ENCODE measurements at regions of chr17 and their contacts with region 1.

Region 1: DNA sequence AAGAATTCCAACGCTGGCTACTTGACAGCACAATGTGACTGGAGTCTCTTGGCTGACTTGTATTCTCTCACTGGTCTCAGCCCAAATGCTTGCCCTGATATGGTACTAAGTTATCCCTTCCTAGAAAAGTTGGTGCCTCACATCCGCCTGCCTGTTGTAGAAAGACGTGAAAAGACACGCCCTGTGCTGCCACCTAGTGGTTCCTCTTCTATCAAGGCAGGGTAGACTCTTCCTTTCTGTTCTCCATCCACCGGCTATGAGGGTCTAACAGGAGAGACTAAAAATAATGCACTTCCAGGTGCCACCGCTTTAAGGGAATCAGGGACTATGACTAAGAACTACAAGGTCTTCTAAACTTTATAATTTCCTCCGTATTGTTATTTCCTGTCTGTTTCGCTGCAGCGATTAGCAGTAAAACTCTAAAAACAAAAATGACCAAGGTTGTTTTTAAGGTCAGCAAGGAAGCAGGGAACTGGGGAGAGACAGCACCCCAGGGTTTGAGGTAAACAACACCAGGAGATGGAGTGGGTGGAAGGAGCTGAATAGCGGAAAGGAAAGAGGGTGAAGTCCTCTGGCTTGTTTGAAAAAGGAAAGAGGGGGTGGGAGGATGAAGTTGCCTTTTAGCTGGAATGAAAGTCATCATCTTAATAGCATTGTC is 109.5 kb downstream of the YPEL2 start:
- DNase-seq: peak; percentile 88
- ATAC-seq: peak; percentile 99
- H3K4me3 ChIP-seq: no peak overlapping the region
- H3K27ac ChIP-seq: no peak overlapping the region
- H3K4me1 ChIP-seq: peaks cover 5% of the 10 kb centered on the region
- H3K27me3 ChIP-seq: no peaks in the 10 kb centered on the region
- CTCF ChIP-seq: peak; percentile 81
- POLR2A ChIP-seq: no peak
- RAD21 ChIP-seq: peak; percentile 94

Region 2: GRCh38 chr17:59220376-59221158 is 220.3 kb before region 1 on chr17 and contains the start of gene GDPD1:
- CTCF ChIA-PET with region 1: no interaction called
- POLR2A ChIA-PET with region 1: no interaction called
- dilution Hi-C with region 1: no loop called
- in situ Hi-C with region 1: no loop called
- intact Hi-C with region 1: loop called (anchors 5 kb)
- DNase-seq: peak; percentile 87
- ATAC-seq: peak; percentile 98
- H3K4me3 ChIP-seq: peak within 1 kb of the TSS; percentile 69
- H3K27ac ChIP-seq: peak within 1 kb of the TSS; percentile 0; the same call in 1 of the 2 replicates
- H3K4me1 ChIP-seq: no peaks in the 10 kb centered on the region
- H3K27me3 ChIP-seq: no peaks in the 10 kb centered on the region
- CTCF ChIP-seq: peak; percentile 63
- POLR2A ChIP-seq: no peak
- RAD21 ChIP-seq: peak; percentile 55
- total RNA-seq, gene GDPD1: 0.72 and 1.1 TPM in 2 replicates

Region 3: DNA sequence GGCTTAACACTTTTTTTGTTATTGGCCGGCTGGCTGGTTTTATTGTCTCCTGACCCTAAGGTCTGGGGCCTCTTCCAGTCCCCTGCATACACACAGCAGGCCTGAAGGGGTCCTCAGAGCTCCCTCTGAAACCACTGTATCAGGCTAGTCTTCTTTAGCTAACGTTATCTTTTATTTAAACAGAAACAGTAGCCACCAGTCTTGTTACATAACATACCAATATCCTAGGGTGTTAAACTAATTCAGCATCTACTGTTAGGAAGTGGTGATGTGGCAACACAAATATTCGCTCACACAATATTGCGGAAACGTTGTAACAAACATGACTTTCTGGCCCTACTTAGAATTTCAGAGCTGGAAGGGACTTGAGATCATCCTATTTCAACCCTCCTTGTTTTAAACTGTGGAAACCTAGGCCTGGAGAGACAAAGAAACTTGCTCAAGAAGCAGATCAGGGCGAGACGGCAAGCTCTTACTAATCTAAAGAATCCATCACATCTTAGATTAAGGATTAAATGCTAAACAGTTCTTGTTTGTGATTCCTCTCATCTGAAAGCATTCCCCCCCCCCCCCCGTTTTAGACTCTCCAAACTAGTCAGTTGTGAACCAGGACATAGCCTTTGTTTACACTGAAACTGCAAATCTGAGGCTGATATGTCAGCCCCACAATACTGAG is 111.1 kb before region 1 on chr17:
- CTCF ChIA-PET with region 1: interaction called, 12 read pairs
- POLR2A ChIA-PET with region 1: no interaction called
- dilution Hi-C with region 1: no loop called
- in situ Hi-C with region 1: no loop called
- intact Hi-C with region 1: loop called (anchors 1 kb)
- DNase-seq: peak; percentile 75
- ATAC-seq: peak; percentile 64
- H3K4me3 ChIP-seq: no peak overlapping the region
- H3K27ac ChIP-seq: no peak overlapping the region
- H3K4me1 ChIP-seq: peaks cover 13% of the 10 kb centered on the region
- H3K27me3 ChIP-seq: peaks cover 16% of the 10 kb centered on the region
- CTCF ChIP-seq: peak; percentile 86
- POLR2A ChIP-seq: no peak
- RAD21 ChIP-seq: peak; percentile 90

Region 4: DNA sequence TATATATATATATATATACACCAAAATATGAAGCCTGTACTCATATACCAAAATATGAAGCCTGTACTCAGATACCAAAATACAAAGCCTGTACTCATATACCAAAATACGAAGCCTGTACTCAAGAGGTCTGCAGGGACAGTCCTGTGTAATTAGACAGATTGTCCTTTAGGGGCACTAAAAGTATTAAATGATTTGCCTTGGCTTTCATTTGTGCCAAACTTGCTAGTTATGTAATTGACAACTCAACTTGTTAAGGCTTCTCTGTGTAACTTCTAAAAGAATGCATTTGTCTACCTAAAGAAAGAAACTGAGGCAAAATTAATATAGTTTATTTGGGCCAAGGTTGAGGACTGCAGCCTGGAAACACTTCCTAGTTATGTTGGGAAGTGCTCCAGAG is 93.7 kb after region 1 on chr17:
- CTCF ChIA-PET with region 1: no interaction called
- POLR2A ChIA-PET with region 1: no interaction called
- dilution Hi-C with region 1: no loop called
- in situ Hi-C with region 1: no loop called
- intact Hi-C with region 1: no loop called
- DNase-seq: no peak
- ATAC-seq: no peak
- H3K4me3 ChIP-seq: no peak overlapping the region
- H3K27ac ChIP-seq: no peak overlapping the region
- H3K4me1 ChIP-seq: no peaks in the 10 kb centered on the region
- H3K27me3 ChIP-seq: peaks cover 7% of the 10 kb centered on the region
- CTCF ChIP-seq: no peak
- POLR2A ChIP-seq: no peak
- RAD21 ChIP-seq: no peak